ENCODE measurements at regions of chr2 and their contacts with region 1.

Region 1: DNA sequence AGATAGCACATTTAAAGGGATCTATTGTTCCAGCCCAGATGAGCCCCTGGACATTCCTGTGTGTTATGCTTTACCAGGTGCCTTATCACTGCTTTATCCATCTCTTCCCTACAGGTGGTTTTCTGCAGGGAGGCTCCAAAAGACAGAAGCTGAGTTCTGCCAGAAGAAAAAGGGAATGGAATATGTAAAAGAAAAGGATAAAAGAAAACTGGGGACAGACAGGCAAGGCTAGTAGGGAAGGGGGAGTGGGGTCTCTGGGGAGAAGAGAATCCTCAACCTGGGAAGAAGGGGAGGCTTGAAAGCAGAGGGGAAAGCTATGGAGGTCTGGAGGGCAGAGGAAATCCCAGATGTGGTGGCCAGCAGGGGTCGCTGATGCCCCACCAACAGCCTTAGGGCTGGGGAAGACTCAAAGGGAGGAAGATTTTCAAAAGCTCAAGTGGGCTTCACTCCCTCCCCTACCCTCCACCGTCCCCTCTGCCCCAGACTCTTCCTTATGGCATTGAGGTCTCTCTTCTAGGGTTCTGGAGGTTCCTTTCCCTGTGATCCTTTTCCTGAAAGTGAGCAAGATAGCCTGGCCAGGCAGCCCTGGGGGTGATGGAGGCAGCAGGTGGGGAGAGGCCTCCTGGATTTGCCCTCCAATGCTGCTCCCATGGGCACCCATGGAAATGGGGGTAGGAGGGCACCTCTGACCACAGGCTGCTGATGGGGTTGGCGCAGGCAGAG is 178.1 kb upstream of the PKDCC start:
- DNase-seq: peak; percentile 81
- H3K4me3 Mint-ChIP-seq: no peak overlapping the region
- H3K27ac Mint-ChIP-seq: no peak overlapping the region
- H3K4me1 Mint-ChIP-seq: peaks cover 5% of the 10 kb centered on the region
- H3K27me3 Mint-ChIP-seq: peaks cover 6% of the 10 kb centered on the region

Region 2: GRCh38 chr2:41853427-41854216 is 16.1 kb before region 1 on chr2:
- CTCF ChIA-PET with region 1: interaction called, 27 read pairs
- POLR2A ChIA-PET with region 1: no interaction called
- intact Hi-C with region 1: no loop called
- DNase-seq: no peak
- H3K4me3 Mint-ChIP-seq: no peak overlapping the region
- H3K27ac Mint-ChIP-seq: no peak overlapping the region
- H3K4me1 Mint-ChIP-seq: peaks cover 12% of the 10 kb centered on the region
- H3K27me3 Mint-ChIP-seq: peaks cover 13% of the 10 kb centered on the region

Region 3: DNA sequence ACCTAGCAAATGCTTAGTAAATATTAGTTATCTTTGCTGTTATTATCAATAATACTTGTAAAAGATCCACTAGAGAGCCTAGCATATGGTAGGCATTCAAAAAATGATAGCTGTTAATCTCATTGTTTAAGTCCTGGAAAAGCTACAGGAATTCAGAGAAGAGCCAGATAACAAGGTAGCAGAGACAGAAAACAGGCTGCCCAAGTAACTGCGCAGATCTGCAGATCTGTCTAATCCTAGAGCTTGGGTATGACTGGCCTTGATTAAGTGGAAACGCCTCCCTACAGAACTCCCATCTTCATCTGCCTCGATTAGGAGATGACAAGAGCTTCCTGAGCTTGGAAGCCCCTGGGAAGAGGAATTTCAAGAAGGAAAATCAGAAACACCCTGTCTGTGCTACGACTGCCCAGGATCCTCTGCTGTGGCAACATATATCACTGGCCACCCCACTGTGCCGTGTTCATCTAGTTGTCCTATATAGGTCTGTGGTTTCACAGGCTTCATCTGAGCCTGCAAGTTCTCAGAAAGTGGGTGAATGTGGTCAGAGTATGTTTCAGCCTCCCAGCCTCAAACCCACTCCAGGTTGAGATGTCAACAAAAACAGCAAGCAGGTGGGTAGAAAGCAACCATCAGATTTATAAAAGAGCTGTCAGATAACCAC is 26.6 kb after region 1 on chr2:
- CTCF ChIA-PET with region 1: interaction called, 11 read pairs
- POLR2A ChIA-PET with region 1: no interaction called
- intact Hi-C with region 1: no loop called
- DNase-seq: peak; percentile 36
- H3K4me3 Mint-ChIP-seq: no peak overlapping the region
- H3K27ac Mint-ChIP-seq: no peak overlapping the region
- H3K4me1 Mint-ChIP-seq: peaks cover 15% of the 10 kb centered on the region
- H3K27me3 Mint-ChIP-seq: no peaks in the 10 kb centered on the region

Region 4: DNA sequence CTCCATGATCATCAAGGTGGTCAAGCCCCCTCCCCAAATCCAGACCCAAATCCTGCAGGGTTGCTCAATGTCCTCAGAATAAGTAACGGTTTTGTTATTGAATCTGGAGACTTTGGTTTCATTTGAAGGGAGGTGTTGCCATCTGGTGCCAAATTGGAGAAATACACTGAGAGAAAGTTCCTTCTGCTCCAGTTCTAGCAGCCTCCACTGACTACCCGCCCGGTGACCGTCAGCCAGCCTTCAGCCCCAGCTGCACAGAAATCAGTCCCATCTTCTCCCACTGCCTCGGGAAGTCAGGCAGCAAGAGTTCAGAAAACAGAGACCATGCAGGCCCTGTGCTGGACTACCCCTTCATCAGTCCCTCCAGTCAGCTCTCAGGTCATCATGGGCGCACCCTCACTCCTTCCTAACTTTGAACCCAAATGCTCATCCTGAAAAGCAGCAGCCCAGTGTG is 216.8 kb after region 1 on chr2:
- CTCF ChIA-PET with region 1: interaction called, 430 read pairs
- POLR2A ChIA-PET with region 1: interaction called, 5 read pairs
- intact Hi-C with region 1: loop called (anchors 1 kb)
- DNase-seq: peak; percentile 41
- H3K4me3 Mint-ChIP-seq: no peak overlapping the region
- H3K27ac Mint-ChIP-seq: no peak overlapping the region
- H3K4me1 Mint-ChIP-seq: peaks cover 4% of the 10 kb centered on the region
- H3K27me3 Mint-ChIP-seq: no peaks in the 10 kb centered on the region

Region 5: DNA sequence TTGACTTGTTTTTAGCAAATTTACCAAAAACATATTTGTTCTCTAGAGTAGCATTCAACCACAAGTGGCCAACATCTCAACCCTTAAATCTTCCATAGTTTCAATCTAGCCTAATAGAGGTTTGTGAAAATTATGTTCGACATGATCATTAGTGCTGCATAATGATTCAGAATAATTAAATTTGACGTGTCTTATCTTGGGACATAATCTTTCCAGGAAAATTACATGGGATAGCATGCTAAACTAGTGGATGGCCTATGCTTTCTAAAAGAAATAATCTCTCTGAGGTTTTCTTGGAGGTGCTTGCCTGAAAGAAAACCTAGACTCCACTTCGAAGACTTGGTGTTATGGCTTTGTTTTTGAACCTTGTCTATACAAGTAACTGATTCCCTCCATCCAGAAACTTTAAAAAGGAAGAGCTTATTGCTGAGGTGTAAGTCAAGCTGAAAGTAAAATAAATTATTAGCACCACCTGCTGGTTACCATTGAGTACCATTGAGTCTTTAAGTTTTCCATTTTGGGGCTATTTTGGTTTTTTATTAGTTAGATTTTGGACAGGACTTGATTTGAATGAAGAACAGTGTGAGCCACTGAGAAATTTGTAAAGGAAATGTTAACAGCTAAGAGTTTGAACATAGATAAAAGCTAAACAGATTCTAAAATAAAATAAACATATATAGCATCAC is 458.6 kb after region 1 on chr2:
- CTCF ChIA-PET with region 1: interaction called, 10 read pairs
- POLR2A ChIA-PET with region 1: no interaction called
- intact Hi-C with region 1: no loop called
- DNase-seq: no peak
- H3K4me3 Mint-ChIP-seq: no peak overlapping the region
- H3K27ac Mint-ChIP-seq: peak overlapping the region; percentile 54
- H3K4me1 Mint-ChIP-seq: peaks cover 5% of the 10 kb centered on the region
- H3K27me3 Mint-ChIP-seq: no peaks in the 10 kb centered on the region

Measured in activated CD4-positive, alpha-beta memory T cell treated with anti-CD3 and anti-CD28 coated beads for 36 hours (primary cell).